ENCODE measurements at regions of chr6 and their contacts with region 1.

Region 1: GRCh38 chr6:28207510-28208110 is 17.5 kb upstream of the ZSCAN9 start:
- DNase-seq: peak in 2 of 9 experiments; percentile 30 to 48
- ATAC-seq: no peak
- H3K4me3 ChIP-seq: no peak overlapping the region
- H3K4me3 Mint-ChIP-seq: peak overlapping the region; percentile 63
- H3K27ac ChIP-seq: no peak overlapping the region
- H3K27ac Mint-ChIP-seq: no peak overlapping the region
- H3K4me1 ChIP-seq: peaks cover 11% of the 10 kb centered on the region
- H3K4me1 Mint-ChIP-seq: peaks cover 24% of the 10 kb centered on the region
- H3K27me3 ChIP-seq: peaks cover 39 to 53% of the 10 kb centered on the region in 2 experiments
- H3K27me3 Mint-ChIP-seq: peaks cover 79% of the 10 kb centered on the region
- CTCF ChIP-seq: no peak

Region 2: GRCh38 chr6:28167068-28167467 is 40.5 kb before region 1 on chr6:
- CTCF ChIA-PET with region 1: no interaction called
- POLR2A ChIA-PET with region 1: no interaction called
- intact Hi-C with region 1: loop called in 1 of 2 experiments (anchors 5 kb)
- DNase-seq: no peak
- ATAC-seq: no peak
- H3K4me3 ChIP-seq: no peak overlapping the region
- H3K4me3 Mint-ChIP-seq: no peak overlapping the region
- H3K27ac ChIP-seq: no peak overlapping the region
- H3K27ac Mint-ChIP-seq: no peak overlapping the region
- H3K4me1 ChIP-seq: peaks cover under 1% of the 10 kb centered on the region
- H3K4me1 Mint-ChIP-seq: peaks cover 3% of the 10 kb centered on the region
- H3K27me3 ChIP-seq: no peaks in the 10 kb centered on the region
- H3K27me3 Mint-ChIP-seq: peaks cover 4% of the 10 kb centered on the region
- CTCF ChIP-seq: no peak